Left cardiac atrium (tissue), 4 donors: ENCODE measurements at regions of chr1 and their contacts with region 1.

Region 1: GRCh38 chr1:43763497-43763973 is 56.2 kb downstream of the ST3GAL3 start:
- DNase-seq: peak; percentile 54
- ATAC-seq: peak; percentile 94 to 96

Region 2: GRCh38 chr1:43934101-43934985 is 170.8 kb after region 1 on chr1:
- intact Hi-C with region 1: loop called (anchors 1 to 5 kb)
- DNase-seq: peak; percentile 54
- ATAC-seq: peak; percentile 54 to 67

Region 3: GRCh38 chr1:44049839-44050238 is 286.3 kb after region 1 on chr1:
- intact Hi-C with region 1: loop called in 1 of 2 experiments (anchors 5 kb)
- DNase-seq: no peak
- ATAC-seq: peak in 1 of 2 donors; percentile 67